Natural killer cell (primary cell): ENCODE measurements at regions of chr4 and their contacts with region 1.

Region 1: GRCh38 chr4:85039526-85039925 is 73.0 kb upstream of the WDFY3 start:
- DNase-seq: no peak
- ATAC-seq: no peak
- H3K4me3 ChIP-seq: no peak overlapping the region
- H3K4me3 Mint-ChIP-seq: no peak overlapping the region
- H3K27ac ChIP-seq: no peak overlapping the region
- H3K27ac Mint-ChIP-seq: no peak overlapping the region
- H3K4me1 ChIP-seq: no peaks in the 10 kb centered on the region
- H3K4me1 Mint-ChIP-seq: no peaks in the 10 kb centered on the region
- H3K27me3 ChIP-seq: no peaks in the 10 kb centered on the region
- H3K27me3 Mint-ChIP-seq: no peaks in the 10 kb centered on the region
- CTCF ChIP-seq: no peak

Region 2: GRCh38 chr4:85019411-85019810 is 20.1 kb before region 1 on chr4:
- intact Hi-C with region 1: loop called (anchors 1 kb)
- DNase-seq: no peak
- ATAC-seq: no peak
- H3K4me3 ChIP-seq: no peak overlapping the region
- H3K4me3 Mint-ChIP-seq: no peak overlapping the region
- H3K27ac ChIP-seq: no peak overlapping the region
- H3K27ac Mint-ChIP-seq: no peak overlapping the region
- H3K4me1 ChIP-seq: no peaks in the 10 kb centered on the region
- H3K4me1 Mint-ChIP-seq: no peaks in the 10 kb centered on the region
- H3K27me3 ChIP-seq: no peaks in the 10 kb centered on the region
- H3K27me3 Mint-ChIP-seq: no peaks in the 10 kb centered on the region
- CTCF ChIP-seq: no peak